Posterior cingulate gyrus (tissue), 11 donors: ENCODE measurements at regions of chr7 and their contacts with region 1.

Region 1: DNA sequence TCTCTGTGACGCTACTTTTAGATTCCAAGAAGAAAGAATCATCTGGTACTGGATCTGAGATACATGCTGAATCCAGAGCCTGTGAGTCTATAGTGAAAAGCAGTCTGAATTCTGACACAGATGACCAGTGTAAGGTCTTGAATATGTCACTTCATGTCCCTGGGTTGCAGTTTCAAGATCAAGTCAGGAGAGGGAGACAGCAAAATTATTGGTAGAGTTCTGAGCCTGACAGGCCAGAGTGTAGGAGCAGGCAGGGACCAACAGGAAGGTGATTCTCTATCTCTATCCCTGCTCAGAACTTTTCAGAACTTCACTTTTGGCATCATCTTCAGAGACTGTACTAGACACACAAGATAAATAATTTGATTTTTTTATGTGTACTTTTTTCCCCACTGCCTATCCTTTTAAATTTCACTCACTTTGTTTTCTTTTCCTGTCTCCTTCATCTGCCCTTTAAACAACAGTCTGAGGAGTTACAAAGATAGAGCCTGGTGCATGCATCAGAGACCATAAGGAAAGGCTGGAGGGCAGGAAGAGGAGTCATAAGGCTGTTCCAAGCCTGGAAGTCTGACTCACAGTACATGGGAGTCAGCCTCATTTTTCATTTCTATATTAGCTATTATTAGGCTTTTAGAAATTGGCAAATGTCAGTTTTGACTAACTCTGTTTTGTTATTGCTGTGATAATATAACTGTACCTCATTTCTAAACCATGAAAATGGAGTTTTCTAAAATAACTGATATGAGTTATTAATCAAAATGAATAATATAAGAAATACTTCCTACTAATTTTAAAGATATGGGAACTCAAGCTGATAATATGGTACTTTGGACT is 120.2 kb upstream of the TMEM229A start:
- DNase-seq: peak in 1 of 10 donors; percentile 31

Region 2: DNA sequence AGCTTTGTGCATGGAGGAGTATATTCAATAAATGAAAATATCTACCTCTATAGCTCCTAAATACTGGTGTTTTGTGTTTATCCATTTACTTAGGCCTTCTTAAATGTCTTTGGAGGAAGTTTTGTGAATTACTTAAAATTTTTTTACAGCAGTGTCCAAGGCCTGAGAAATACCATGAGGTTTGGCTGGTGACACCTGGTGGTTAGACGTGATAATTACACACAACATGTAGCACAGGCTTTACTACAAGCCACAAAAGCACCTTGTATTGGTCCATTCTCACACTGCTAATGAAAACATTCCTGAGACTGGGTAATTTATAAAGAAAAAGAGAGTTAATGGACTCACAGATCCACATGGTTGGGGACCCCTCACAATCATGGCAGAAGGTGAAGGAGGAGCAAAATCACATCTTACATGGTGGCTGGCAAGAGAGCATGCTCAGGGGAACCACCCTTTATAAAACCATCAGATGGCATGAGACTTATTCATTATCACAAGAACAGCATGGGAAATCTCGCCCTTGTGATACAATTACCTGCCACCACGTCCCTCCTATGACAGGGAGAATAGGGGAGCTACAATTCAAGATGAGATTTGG is 287.5 kb before region 1 on chr7:
- intact Hi-C with region 1: no loop called
- DNase-seq: peak in 4 of 10 donors; percentile 16 to 55 (median 32)

Region 3: DNA sequence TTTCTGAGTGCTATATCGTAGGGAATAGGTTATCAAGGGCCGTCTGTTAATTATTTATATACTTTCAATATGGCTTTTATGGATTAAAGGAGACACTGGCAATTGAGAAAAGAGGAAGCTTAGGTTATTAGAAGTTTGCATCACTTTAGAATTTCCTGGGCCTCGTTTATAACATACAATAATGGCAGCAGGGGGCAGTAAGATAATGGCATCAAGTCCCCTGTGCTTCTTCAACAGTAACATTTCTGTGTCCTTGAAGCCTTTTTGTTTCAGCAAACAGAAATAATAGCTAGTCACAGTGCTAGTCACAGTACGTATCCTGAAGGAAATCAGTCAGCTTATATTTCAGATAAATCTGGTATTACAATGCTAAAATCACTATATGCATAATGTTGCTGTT is 186.1 kb before region 1 on chr7:
- intact Hi-C with region 1: loop called (anchors 2 kb)
- DNase-seq: peak in 1 of 10 donors; percentile 47

Region 4: GRCh38 chr7:124784879-124785818 is 632.1 kb after region 1 on chr7:
- intact Hi-C with region 1: loop called (anchors 1 kb)
- DNase-seq: peak in 9 of 10 donors; percentile 31 to 94 (median 65)

Region 5: GRCh38 chr7:124840435-124840834 is 687.4 kb after region 1 on chr7:
- intact Hi-C with region 1: loop called (anchors 5 kb)
- DNase-seq: no peak